ENCODE measurements at regions of chr5 and their contacts with region 1.

Region 1: GRCh38 chr5:54517174-54518092 is at the start of gene SNX18:
- DNase-seq: peak; percentile 94
- ATAC-seq: peak; percentile 91
- H3K4me3 Mint-ChIP-seq: peak within 1 kb of the TSS; percentile 87
- H3K27ac Mint-ChIP-seq: peak within 1 kb of the TSS; percentile 40
- H3K4me1 Mint-ChIP-seq: peaks cover 35% of the 10 kb centered on the region
- H3K27me3 Mint-ChIP-seq: peaks cover 16% of the 10 kb centered on the region
- total RNA-seq, gene SNX18: 35.2 to 45.3 TPM

Region 2: GRCh38 chr5:53991942-53992341 is 525.5 kb before region 1 on chr5:
- CTCF ChIA-PET with region 1: no interaction called
- DNase-seq: no peak
- ATAC-seq: no peak
- H3K4me3 Mint-ChIP-seq: no peak overlapping the region
- H3K27ac Mint-ChIP-seq: no peak overlapping the region
- H3K4me1 Mint-ChIP-seq: peaks cover 9% of the 10 kb centered on the region
- H3K27me3 Mint-ChIP-seq: no peaks in the 10 kb centered on the region

Region 3: GRCh38 chr5:54492178-54492577 is 25.3 kb before region 1 on chr5:
- CTCF ChIA-PET with region 1: interaction called, 10 read pairs
- DNase-seq: no peak
- ATAC-seq: no peak
- H3K4me3 Mint-ChIP-seq: no peak overlapping the region
- H3K27ac Mint-ChIP-seq: no peak overlapping the region
- H3K4me1 Mint-ChIP-seq: no peaks in the 10 kb centered on the region
- H3K27me3 Mint-ChIP-seq: peaks cover 16% of the 10 kb centered on the region

Region 4: DNA sequence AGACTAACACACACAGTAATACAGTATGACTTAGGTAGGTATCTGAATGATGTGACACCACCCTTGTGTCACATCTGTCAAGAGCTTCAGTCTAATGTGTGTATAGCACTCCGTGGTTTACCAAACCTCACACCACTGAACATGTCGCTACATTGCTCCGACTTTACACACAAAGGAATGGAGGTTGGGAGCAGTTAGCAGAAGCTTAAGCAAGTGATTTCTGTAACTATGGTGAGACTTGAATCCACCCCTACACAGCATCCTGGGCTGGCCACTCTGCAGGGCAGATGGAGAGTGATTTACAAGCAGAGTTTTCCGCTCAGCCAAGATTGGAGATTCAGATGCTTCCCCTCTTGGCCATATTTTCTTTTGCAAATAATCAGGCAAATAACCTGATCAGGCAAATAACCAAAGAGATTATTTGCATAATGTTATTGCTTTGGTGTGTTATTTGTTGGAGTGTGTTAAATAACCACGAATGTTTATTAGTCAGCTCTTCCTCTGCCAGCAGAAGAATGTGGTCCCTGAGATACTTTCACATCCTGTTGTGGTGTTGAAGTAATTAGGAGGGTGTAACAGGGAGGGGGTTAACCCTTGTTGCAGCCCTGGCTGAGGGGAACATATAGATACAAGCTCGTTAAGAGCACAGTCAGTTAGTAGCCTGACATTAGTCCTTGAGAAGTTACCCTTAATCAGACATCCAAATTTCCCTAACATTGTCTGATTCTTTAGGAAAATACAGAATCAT is 92.9 kb after region 1 on chr5:
- CTCF ChIA-PET with region 1: interaction called, 17 read pairs
- DNase-seq: peak; percentile 87
- ATAC-seq: peak; percentile 92
- H3K4me3 Mint-ChIP-seq: peak overlapping the region; percentile 38
- H3K27ac Mint-ChIP-seq: peak overlapping the region; percentile 93
- H3K4me1 Mint-ChIP-seq: peaks cover 31% of the 10 kb centered on the region
- H3K27me3 Mint-ChIP-seq: no peaks in the 10 kb centered on the region

Region 5: GRCh38 chr5:54743997-54744788 is 226.8 kb after region 1 on chr5:
- CTCF ChIA-PET with region 1: interaction called, 16 read pairs
- DNase-seq: peak; percentile 82
- ATAC-seq: peak; percentile 96
- H3K4me3 Mint-ChIP-seq: peak overlapping the region; percentile 23
- H3K27ac Mint-ChIP-seq: peak overlapping the region; percentile 94
- H3K4me1 Mint-ChIP-seq: peaks cover 39% of the 10 kb centered on the region
- H3K27me3 Mint-ChIP-seq: no peaks in the 10 kb centered on the region

Region 6: DNA sequence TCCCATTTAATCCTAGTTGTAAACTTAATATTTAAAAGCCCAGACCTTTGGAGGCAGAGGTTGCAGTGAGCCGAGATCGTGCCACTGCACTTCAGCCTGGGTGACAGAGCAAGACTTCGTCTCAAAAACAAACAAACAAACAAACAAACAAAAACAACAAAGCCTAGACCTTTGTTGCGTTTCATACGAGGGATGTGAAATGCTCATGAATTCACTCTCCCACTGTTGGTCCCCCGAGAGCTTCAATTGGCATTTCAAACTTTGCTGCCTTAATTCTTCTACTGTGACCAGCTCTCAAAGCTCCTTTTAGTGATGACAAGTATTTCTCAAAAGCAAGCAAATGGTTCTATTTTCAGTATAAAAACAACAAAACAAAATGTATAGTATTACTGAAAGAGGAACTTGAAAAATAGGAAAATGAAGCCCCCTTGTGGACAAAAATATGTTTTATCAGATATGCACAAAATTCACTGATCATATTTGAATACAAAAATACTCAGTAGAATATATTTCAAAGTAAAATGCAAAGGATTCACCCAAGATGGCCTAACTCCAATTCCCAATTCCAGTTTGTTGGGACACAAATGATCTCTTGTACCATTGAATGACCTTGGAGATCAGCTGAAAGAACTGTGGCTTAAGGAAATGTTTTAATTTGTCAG is 327.6 kb after region 1 on chr5:
- CTCF ChIA-PET with region 1: interaction called, 131 read pairs
- DNase-seq: no peak
- ATAC-seq: peak; percentile 69
- H3K4me3 Mint-ChIP-seq: no peak overlapping the region
- H3K27ac Mint-ChIP-seq: no peak overlapping the region
- H3K4me1 Mint-ChIP-seq: peaks cover 18% of the 10 kb centered on the region
- H3K27me3 Mint-ChIP-seq: peaks cover 16% of the 10 kb centered on the region

Region 7: DNA sequence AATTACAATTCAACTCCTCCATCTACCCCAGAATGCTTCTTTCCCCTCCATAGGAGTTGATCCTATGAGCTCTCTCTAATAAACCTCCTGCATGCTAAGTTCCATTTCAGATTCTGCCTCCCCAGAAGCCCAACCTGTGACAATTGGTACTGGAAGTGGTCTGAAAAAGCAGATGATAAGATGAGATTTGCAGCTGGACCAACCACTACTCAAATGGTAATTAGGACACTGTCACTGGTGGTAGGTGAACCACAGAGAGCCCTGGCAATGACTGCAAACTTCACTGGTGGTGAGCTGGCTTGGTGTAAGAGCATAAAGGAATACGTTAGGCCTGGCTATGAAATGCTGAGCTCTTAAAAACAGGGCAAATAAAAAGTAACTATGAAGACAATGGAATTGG is 355.4 kb after region 1 on chr5:
- CTCF ChIA-PET with region 1: interaction called, 70 read pairs
- DNase-seq: no peak
- ATAC-seq: no peak
- H3K4me3 Mint-ChIP-seq: no peak overlapping the region
- H3K27ac Mint-ChIP-seq: no peak overlapping the region
- H3K4me1 Mint-ChIP-seq: peaks cover 24% of the 10 kb centered on the region
- H3K27me3 Mint-ChIP-seq: peaks cover 80% of the 10 kb centered on the region

Region 8: GRCh38 chr5:55159763-55160492 is 642.5 kb after region 1 on chr5 and contains the start of gene GPX8:
- CTCF ChIA-PET with region 1: interaction called, 11 read pairs
- DNase-seq: no peak
- ATAC-seq: peak; percentile 76
- H3K4me3 Mint-ChIP-seq: no peak within 1 kb of the TSS
- H3K27ac Mint-ChIP-seq: no peak within 1 kb of the TSS
- H3K4me1 Mint-ChIP-seq: peaks cover 4% of the 10 kb centered on the region
- H3K27me3 Mint-ChIP-seq: peaks cover 45% of the 10 kb centered on the region
- total RNA-seq, gene GPX8: not detected